Right cardiac atrium (tissue), 5 donors: ENCODE measurements at regions of chr15 and their contacts with region 1.

Region 1: GRCh38 chr15:101088788-101089583 is 162.9 kb downstream of the CHSY1 start:
- DNase-seq: peak; percentile 76 to 90 (median 90)
- ATAC-seq: peak; percentile 60 to 67
- H3K4me3 ChIP-seq: no peak overlapping the region
- H3K27ac ChIP-seq: no peak overlapping the region
- H3K4me1 ChIP-seq: peaks cover 12% of the 10 kb centered on the region
- H3K27me3 ChIP-seq: no peaks in the 10 kb centered on the region

Region 2: DNA sequence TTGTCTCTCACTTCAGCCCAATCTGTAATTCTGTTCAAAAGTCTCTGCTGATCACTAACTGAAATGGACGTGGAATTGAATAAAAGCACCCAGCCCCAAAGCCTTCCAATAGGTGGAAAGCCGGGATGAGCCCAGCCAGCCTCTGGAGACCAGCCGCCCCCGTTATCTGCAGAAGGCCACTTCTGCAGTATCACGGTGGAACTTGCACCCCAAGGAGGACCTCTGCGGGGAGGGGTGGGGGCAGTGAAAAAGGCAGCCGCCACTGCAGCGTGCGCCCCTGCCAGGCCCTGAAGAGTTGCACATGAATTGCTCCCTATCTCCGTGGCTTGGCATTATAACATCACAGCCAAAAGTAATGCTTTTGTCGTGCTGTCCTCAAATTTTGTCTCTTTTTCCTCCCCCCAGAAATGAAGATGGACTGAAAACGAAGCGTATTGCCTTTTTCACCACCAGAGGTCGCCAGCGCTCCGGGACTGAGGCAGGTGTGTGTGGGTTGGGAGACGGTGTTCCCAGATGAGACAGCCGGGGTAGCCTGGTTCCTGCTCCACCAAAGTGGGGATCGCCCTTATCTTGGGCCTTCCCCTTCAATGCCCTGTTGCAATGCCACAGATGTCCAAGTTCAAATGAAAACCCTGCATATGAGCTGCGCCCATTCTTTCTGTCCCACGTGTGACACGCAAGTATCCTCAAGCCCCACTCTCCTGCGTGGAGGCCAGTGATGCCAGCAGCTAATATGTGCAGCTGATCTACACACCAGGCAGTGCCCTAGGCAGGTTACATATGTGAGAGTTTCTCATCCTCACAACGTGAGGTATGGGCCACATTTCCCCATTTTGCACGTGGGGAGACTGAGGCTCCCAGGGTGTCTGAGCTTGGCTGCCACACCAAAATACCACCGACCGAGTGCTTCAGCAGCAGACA is 73.8 kb before region 1 on chr15:
- intact Hi-C with region 1: loop called in 3 of 4 experiments (anchors 5 to 10 kb)
- DNase-seq: peak; percentile 78 to 90 (median 90)
- ATAC-seq: peak; percentile 76 to 79
- H3K4me3 ChIP-seq: no peak overlapping the region
- H3K27ac ChIP-seq: no peak overlapping the region
- H3K4me1 ChIP-seq: no peaks in the 10 kb centered on the region
- H3K27me3 ChIP-seq: no peaks in the 10 kb centered on the region

Region 3: GRCh38 chr15:101024073-101024695 is 64.8 kb before region 1 on chr15:
- intact Hi-C with region 1: loop called in 3 of 4 experiments (anchors 5 to 10 kb)
- DNase-seq: peak; percentile 67 to 71 (median 68)
- ATAC-seq: peak; percentile 74 to 76
- H3K4me3 ChIP-seq: no peak overlapping the region
- H3K27ac ChIP-seq: peak overlapping the region; percentile 54
- H3K4me1 ChIP-seq: peaks cover 9% of the 10 kb centered on the region
- H3K27me3 ChIP-seq: no peaks in the 10 kb centered on the region

Region 4: DNA sequence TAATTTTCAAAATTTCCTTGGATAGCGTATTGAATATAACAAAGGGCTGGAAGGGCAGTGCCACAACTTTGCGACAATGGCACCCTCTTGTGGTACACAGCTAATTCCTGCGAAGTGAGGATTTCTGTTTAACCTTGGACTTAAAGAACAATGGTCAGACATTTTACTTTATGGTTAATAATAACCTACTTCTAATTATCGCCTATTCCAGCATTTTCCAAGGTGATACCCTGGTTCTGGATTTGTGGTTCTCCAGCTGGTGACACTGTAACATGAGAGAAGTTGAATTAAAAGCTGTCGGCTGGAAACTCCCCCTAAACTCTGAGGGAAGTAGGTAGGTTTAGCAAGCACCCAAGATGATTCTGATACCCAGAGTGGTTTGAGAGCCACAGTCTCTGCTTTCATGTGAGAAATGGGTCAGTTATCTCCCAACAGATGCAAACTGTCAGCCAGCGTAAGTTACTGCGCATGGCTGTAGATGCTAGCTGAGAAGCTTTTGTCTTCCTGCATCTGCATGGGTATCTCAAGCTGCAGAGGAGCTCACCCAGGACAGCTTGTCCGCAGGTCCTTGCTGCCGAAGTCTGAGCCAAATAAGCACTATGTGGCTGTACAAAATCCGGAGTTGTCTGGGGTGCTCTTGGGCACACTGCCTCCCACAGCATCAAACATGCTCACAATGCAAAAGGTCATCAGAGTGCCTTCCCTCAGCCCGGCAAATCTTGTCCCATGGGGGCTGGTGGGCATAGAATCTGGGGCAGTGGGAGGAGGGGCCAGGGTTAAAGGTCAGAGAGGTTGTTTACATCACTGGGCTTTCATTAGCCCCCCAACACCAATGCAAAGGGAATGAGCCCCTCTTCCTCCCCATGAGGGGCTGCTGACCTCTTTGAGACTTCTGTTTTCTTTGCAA is 169.5 kb after region 1 on chr15:
- intact Hi-C with region 1: loop called (anchors 2 to 5 kb)
- DNase-seq: peak; percentile 63 to 69 (median 68)
- ATAC-seq: peak; percentile 42 to 50
- H3K4me3 ChIP-seq: no peak overlapping the region
- H3K27ac ChIP-seq: no peak overlapping the region
- H3K4me1 ChIP-seq: no peaks in the 10 kb centered on the region
- H3K27me3 ChIP-seq: no peaks in the 10 kb centered on the region

Region 5: DNA sequence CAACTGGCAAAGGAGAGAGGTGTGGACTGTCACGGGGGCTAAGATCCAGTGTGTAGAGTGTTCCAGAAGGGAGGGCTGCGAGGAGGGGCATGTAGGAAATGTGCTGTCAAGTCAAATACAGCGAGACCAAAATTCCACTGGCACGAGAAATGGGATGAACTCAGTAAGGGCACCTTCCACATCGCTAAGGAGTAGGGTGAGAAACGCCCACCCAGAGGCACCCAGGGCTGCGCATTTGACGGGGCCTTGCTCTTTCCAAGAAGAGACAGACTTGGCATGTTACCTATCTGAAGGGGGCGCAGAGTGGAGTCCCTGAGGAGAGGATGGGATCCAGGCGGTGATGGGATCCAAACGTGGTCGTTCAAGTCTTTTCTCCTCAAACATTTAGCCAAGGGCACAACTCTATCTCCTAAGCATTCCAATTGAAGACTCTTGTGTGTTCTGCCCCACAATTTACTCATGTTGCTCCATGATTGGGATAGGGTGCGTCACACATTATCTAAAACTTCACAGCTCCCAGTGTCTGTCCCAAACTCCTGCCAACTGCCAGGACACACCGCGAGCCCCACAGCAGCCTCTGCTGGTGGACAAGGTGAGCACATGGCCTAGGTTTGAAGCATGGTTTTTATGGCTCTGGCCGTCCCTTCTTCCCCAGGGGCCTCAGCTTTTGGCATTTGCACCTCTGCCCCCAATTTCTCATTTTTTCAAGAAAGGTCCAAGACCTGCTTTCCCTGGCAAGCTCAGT is 180.7 kb after region 1 on chr15:
- intact Hi-C with region 1: loop called in 1 of 4 experiments (anchors 5 kb)
- DNase-seq: peak; percentile 59 to 79 (median 69)
- ATAC-seq: peak; percentile 48 to 56
- H3K4me3 ChIP-seq: no peak overlapping the region
- H3K27ac ChIP-seq: no peak overlapping the region
- H3K4me1 ChIP-seq: no peaks in the 10 kb centered on the region
- H3K27me3 ChIP-seq: no peaks in the 10 kb centered on the region